Mammary epithelial cell (primary cell): ENCODE measurements at regions of chr1 and their contacts with region 1.

Region 1: DNA sequence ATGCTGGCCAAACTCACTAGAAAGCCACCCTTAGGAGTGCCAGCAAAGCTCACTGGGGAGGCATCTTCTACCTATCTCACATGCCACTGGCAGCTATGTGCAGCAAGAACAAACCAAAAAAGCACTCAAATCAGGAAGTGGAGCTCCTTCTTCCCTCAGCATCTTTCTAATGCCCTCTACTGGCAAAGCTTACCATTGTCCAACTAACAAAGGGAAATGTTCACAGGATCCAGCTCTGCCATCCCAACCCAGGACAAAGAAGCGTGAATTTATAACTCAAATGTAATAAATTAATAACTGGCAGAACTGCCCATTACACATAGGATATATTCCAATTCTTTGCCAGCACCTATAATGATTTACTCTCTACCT is 38.9 kb downstream of the LEPR start:
- DNase-seq: peak; percentile 44
- H3K4me3 ChIP-seq: no peak overlapping the region
- H3K27ac ChIP-seq: no peak overlapping the region
- H3K4me1 ChIP-seq: no peaks in the 10 kb centered on the region
- H3K27me3 ChIP-seq: no peaks in the 10 kb centered on the region
- CTCF ChIP-seq: peak; percentile 57 to 79

Region 2: DNA sequence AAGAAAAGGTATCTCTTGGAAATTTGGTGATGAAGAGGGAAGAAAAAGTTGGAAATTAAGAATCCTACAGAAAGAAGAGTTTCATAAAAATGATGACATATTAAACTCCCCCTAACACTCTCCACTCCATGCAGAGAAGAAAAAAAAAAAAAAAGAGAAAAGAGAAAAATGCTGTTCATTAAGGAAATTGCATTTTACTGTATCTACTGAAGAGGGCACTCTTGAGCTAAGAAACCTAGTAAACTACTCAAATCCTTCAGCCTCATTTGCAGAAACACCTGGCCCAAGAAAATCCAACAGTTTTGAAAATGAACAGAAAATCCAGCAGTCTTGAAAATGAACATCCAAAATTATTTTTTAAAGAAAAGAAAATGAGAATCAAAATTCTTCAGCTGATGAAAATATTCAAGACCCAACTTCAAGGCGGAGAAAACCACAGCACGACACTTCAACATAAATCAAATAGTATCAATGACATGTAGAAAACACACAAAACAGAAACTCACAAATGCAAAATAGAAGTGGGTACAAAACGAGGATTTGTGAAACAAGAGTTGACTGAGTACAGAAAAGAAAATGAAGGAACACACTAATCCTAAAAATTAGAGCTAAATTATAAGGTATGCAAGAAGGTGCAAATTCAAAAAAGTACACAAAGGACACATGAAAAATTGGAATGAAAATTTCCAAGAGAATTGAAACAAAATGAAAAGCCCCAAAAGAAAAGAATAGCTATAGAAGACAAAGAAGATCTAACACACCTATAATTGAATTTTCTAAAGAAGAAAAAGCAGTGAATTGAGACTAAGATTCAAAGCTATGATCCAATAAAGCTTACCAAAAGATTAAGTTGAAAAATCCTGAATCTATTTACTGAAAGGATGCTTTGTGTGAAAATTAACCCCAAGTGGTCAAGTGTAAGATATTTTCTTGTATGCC is 223.2 kb before region 1 on chr1:
- CTCF ChIA-PET with region 1: interaction called, 6 read pairs
- dilution Hi-C with region 1: no loop called
- in situ Hi-C with region 1: no loop called
- intact Hi-C with region 1: loop called (anchors 2 kb)
- DNase-seq: peak; percentile 33
- H3K4me3 ChIP-seq: no peak overlapping the region
- H3K27ac ChIP-seq: no peak overlapping the region
- H3K4me1 ChIP-seq: peaks cover under 1% of the 10 kb centered on the region
- H3K27me3 ChIP-seq: no peaks in the 10 kb centered on the region
- CTCF ChIP-seq: peak; percentile 60 to 61

Region 3: GRCh38 chr1:65431111-65431705 is 28.2 kb before region 1 on chr1:
- CTCF ChIA-PET with region 1: interaction called, 7 read pairs
- dilution Hi-C with region 1: no loop called
- in situ Hi-C with region 1: no loop called
- intact Hi-C with region 1: loop called (anchors 1 kb)
- DNase-seq: no peak
- H3K4me3 ChIP-seq: no peak overlapping the region
- H3K27ac ChIP-seq: peak overlapping the region; percentile 78
- H3K4me1 ChIP-seq: peaks cover 46% of the 10 kb centered on the region
- H3K27me3 ChIP-seq: no peaks in the 10 kb centered on the region
- CTCF ChIP-seq: peak; percentile 34 to 48

Region 4: DNA sequence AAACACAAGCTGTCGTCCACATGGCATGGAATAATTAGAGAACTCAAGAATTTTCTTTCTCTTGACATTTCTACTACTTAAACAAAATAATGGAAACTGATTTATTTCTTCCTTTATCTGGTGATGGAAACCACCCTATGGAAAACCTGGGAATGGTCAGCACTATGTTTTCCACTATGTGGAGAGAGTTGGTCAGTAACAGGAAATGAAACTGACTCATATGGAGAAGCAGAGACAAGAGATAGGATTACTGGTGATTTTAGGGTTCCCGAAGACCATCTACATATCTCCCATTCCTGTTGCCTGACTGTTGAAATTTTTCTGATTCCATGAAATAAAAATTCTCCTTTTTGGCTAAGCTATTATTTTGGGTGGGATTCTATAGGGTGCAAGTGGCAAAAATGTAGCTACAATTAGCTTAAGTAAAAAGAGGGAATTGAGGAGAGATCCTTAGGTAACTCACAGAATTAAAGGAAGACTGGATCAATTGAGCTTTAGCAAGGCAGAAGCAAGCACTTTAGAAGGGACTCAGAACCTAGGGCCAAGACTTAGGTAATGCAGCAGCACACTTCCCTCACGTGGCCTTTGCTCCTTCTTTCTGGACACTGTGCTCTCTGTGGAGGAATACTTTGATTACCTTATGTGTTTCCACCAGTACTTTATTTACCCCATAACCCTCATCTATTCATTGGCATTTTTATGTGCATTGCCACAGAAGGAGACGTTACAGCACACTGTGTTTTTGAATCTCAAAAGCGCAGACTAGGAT is 50.7 kb after region 1 on chr1:
- CTCF ChIA-PET with region 1: no interaction called
- dilution Hi-C with region 1: no loop called
- in situ Hi-C with region 1: no loop called
- intact Hi-C with region 1: no loop called
- DNase-seq: no peak
- H3K4me3 ChIP-seq: no peak overlapping the region
- H3K27ac ChIP-seq: no peak overlapping the region
- H3K4me1 ChIP-seq: no peaks in the 10 kb centered on the region
- H3K27me3 ChIP-seq: no peaks in the 10 kb centered on the region
- CTCF ChIP-seq: no peak